ENCODE measurements at regions of chr17 and their contacts with region 1.

Region 1: DNA sequence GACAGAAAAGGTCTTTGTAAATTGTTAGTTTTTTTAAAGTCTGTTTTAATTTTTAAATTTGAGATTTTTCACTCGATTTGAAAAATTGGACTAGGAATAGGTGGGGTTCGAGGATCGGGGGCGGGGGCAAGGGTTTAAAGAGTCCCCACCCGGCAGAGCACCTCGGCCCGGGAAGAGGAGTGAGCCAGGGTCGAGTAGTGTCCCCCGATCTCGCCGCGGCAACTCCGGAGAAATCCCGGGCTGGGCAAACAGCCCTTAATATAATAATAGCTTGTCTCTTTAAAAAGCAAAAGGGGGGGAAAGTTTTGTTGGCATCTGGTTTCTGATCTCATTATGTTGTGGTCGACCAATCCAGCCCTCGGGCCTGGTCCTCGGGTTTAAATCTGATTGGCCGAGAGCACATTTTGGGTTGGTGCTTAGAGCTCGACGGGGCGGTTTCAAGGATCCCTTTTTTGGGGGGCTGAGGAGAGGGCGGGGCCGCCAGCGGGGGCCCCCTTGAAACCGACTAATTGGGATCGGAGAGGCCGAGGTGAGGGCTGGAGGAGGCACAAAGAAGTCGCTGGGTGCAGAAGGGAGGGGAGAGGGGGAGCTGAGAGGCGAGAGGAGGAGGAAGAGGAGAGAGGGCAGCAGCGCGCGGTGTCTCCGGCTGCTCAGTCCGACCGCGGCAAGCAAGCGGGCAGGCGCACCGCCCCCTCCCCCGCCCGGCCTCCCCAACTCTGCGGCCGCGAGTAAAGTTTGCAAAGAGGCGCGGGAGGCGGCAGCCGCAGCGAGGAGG is at the start of gene FZD2:
- DNase-seq: peak; percentile 98 to 99
- ATAC-seq: peak; percentile 89 to 95
- H3K4me3 ChIP-seq: peak within 1 kb of the TSS; percentile 56
- H3K27ac ChIP-seq: peak within 1 kb of the TSS; percentile 94 to 95
- H3K4me1 ChIP-seq: peaks cover 65% of the 10 kb centered on the region
- CTCF ChIP-seq: no peak
- EP300 ChIP-seq: no peak
- POLR2A ChIP-seq: peak; percentile 68
- RAD21 ChIP-seq: peak in 1 of 2 experiments; percentile 9; a peak in 3 of 5 replicates
- polyA plus RNA-seq, gene FZD2: 25.8 and 26.9 TPM in 2 replicates

Region 2: DNA sequence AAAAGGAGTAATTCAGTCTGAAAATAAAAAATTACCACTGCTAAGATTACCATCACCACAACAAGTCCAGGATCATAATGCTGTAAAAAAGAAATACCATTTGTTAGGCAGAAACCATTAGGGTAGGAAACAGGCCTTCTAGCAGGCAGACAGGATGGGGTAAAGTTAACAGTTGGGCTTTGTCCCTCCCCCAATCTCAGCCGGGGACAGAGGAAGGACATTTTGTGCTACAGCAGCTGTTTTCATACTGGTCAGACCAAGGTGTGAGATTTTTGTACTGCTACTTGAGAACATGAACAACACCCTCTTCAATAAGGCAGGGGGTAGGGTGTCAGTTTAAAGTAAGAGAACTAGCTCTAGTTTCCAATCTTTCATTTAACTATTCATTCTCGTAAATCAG is 118.4 kb before region 1 on chr17:
- CTCF ChIA-PET with region 1: no interaction called
- POLR2A ChIA-PET with region 1: no interaction called
- DNase-seq: no peak
- ATAC-seq: no peak
- H3K4me3 ChIP-seq: no peak overlapping the region
- H3K27ac ChIP-seq: peak overlapping the region in 1 of 2 experiments; percentile 17; a peak in 1 of 6 replicates
- H3K4me1 ChIP-seq: peaks cover 7% of the 10 kb centered on the region; the same call in 2 of the 3 replicates
- CTCF ChIP-seq: no peak
- EP300 ChIP-seq: no peak
- POLR2A ChIP-seq: no peak
- RAD21 ChIP-seq: no peak

Region 3: GRCh38 chr17:44543213-44543904 is 13.7 kb before region 1 on chr17:
- CTCF ChIA-PET with region 1: interaction called, 31 read pairs
- POLR2A ChIA-PET with region 1: interaction called, 110 read pairs
- DNase-seq: peak; percentile 94 to 98
- ATAC-seq: peak; percentile 80 to 91
- H3K4me3 ChIP-seq: no peak overlapping the region
- H3K27ac ChIP-seq: peak overlapping the region; percentile 93 to 94
- H3K4me1 ChIP-seq: peaks cover 66% of the 10 kb centered on the region
- CTCF ChIP-seq: no peak
- EP300 ChIP-seq: peak; percentile 51 to 81; a peak in 4 of 5 replicates
- POLR2A ChIP-seq: no peak
- RAD21 ChIP-seq: peak; percentile 46 to 47; a peak in 4 of 5 replicates

Region 4: DNA sequence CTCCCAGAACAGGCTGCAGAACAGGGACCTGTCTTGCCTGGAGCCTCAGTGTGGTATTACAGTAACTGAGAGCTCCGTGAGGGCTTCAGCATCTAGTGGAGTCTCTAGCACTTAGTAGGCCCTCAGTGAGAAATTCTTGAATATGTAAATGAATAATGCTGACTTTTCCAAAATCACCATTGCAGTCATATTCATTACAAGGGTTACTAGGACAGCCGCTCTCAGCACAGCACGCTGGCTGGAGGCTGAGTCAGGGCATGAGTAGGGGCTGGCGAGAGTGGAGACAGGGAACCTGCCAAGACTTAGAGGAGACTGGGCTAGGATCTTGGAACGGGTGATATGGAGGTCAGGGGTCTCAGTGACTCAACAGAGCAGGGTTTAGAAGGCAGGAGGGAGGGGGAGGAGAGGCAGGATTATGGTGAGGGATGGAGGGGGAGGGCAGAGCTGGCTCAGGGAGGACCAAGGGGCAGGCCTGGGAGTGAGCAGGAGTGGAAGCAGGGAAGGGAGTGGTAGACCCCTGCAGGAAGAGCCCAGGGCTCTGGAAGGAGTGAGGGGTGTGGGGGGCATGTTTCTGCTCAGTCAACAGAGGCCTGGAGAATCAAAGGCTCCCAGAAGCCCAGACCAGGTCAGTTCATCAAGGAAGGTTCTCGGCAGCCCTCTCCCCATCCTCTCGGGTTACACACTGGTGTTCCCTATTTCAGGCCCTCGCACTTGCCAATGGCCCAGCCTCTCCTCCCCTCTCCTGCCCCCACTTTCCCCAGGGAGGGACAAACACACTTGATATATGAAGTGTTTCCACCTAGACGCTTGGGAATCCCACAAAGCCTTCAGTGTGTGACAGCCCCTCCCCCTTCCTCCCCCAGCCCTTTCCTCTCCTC is 42.5 kb after region 1 on chr17:
- CTCF ChIA-PET with region 1: interaction called, 8 read pairs
- POLR2A ChIA-PET with region 1: interaction called, 14 read pairs
- DNase-seq: peak; percentile 87 to 93
- ATAC-seq: peak; percentile 90 to 95
- H3K4me3 ChIP-seq: no peak overlapping the region
- H3K27ac ChIP-seq: peak overlapping the region; percentile 86 to 88
- H3K4me1 ChIP-seq: peaks cover 50% of the 10 kb centered on the region
- CTCF ChIP-seq: no peak
- EP300 ChIP-seq: no peak
- POLR2A ChIP-seq: no peak
- RAD21 ChIP-seq: peak; percentile 14 to 32; a peak in 4 of 5 replicates